Tibial artery (tissue), 4 donors: ENCODE measurements at regions of chr13 and their contacts with region 1.

Region 1: DNA sequence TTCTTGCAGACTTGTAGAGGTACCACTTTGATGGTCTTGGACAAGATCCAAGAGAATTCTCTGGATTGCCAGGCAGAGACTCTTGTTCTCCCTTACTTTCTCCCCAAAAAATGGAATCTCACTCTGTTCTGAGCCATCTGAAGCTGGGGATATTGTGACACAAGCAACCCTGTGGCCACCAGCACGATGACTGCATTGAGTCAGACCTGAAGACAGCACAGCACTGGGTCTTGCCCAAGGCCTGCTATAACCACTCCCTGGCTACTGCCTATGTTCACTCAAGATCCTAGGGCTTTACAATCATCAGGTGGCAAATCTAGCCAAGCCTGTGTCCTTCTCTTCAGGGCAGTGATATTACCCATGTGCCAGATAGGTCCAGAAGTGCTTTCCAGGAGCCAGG is 202.5 kb upstream of the SERP2 start:
- DNase-seq: no peak
- H3K4me3 ChIP-seq: no peak overlapping the region
- H3K27ac ChIP-seq: no peak overlapping the region
- H3K4me1 ChIP-seq: peaks cover 0 to 28% (median 15%) of the 10 kb centered on the region in 4 donors
- H3K27me3 ChIP-seq: no peaks in the 10 kb centered on the region
- CTCF ChIP-seq: no peak

Region 2: GRCh38 chr13:43744256-43745031 is 426.7 kb before region 1 on chr13:
- intact Hi-C with region 1: no loop called
- DNase-seq: no peak
- H3K4me3 ChIP-seq: no peak overlapping the region
- H3K27ac ChIP-seq: no peak overlapping the region
- H3K4me1 ChIP-seq: no peaks in the 10 kb centered on the region
- H3K27me3 ChIP-seq: no peaks in the 10 kb centered on the region
- CTCF ChIP-seq: no peak

Region 3: GRCh38 chr13:44188257-44188656 is 17.1 kb after region 1 on chr13:
- intact Hi-C with region 1: no loop called
- DNase-seq: no peak
- H3K4me3 ChIP-seq: no peak overlapping the region
- H3K27ac ChIP-seq: no peak overlapping the region
- H3K4me1 ChIP-seq: peaks cover 0 to 20% (median 3%) of the 10 kb centered on the region in 4 donors
- H3K27me3 ChIP-seq: no peaks in the 10 kb centered on the region
- CTCF ChIP-seq: no peak

Region 4: GRCh38 chr13:44212633-44213403 is 41.7 kb after region 1 on chr13:
- intact Hi-C with region 1: loop called (anchors 2 kb)
- DNase-seq: no peak
- H3K4me3 ChIP-seq: no peak overlapping the region
- H3K27ac ChIP-seq: peak overlapping the region; percentile 29 to 35
- H3K4me1 ChIP-seq: peaks cover 0 to 21% (median 9%) of the 10 kb centered on the region in 4 donors
- H3K27me3 ChIP-seq: no peaks in the 10 kb centered on the region
- CTCF ChIP-seq: no peak